Naive thymus-derived CD8-positive, alpha-beta T cell (primary cell): ENCODE measurements at regions of chr19 and their contacts with region 1.

Region 1: GRCh38 chr19:5947435-5947834 is 30.5 kb downstream of the RANBP3 start:
- DNase-seq: no peak
- ATAC-seq: no peak
- H3K4me3 Mint-ChIP-seq: peak overlapping the region in 7 of 10 donors; percentile 38 to 82 (median 67)
- H3K27ac Mint-ChIP-seq: peak overlapping the region; percentile 15 to 100 (median 90)
- H3K4me1 Mint-ChIP-seq: peaks cover 53 to 91% (median 84%) of the 10 kb centered on the region in 4 donors
- H3K27me3 Mint-ChIP-seq: no peaks in the 10 kb centered on the region

Region 2: DNA sequence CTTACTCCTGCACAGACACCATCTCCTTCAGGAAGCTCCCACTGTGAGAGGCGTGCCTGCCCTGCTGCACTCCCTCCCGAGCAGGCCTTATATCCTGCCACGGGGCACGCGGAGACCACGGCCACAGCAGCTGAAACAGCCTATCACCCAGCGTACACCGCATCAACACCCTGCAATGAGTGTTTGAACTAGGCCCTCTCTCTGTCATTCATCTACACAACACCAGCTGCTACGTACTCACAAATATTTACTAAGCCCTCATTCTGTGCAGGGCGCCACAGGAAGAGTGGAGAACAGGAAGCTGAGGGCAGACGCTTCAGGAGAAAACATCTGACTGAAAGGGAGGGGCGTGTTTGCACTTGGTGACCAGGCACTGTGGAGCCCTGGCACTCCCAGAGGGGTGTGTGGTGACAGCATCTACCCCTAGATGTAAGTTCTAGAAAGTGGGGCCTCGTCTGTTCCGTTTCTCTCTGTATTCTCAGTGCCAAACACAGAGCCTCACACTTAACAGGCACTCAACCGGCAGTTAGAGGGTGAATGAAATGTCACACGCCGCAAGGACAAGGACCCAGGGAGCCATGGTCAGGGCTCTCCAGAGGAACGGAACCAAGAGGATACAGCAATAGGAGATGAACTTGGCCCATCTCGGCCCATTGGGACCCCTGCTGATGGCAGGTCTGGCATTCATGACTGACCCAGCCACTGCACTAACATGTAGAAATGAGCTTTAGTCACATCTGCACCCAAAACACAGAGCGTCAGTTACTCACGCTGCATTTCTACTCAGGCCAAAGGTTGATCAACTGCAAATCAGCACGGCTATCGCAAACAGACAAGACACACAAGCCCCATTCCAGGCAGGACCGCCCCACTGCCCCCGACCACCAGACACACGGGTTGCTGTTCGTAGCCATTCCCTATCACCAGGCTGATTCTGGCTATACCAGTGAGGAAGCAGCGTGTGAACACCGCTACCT is 14.8 kb after region 1 on chr19:
- POLR2A ChIA-PET with region 1: interaction called, 81 read pairs
- DNase-seq: peak; percentile 58 to 90 (median 77)
- ATAC-seq: peak; percentile 91 to 96
- H3K4me3 Mint-ChIP-seq: peak overlapping the region; percentile 71 to 92 (median 88)
- H3K27ac Mint-ChIP-seq: peak overlapping the region; percentile 95 to 100 (median 100)
- H3K4me1 Mint-ChIP-seq: peaks cover 46 to 98% (median 96%) of the 10 kb centered on the region in 4 donors
- H3K27me3 Mint-ChIP-seq: no peaks in the 10 kb centered on the region

Region 3: DNA sequence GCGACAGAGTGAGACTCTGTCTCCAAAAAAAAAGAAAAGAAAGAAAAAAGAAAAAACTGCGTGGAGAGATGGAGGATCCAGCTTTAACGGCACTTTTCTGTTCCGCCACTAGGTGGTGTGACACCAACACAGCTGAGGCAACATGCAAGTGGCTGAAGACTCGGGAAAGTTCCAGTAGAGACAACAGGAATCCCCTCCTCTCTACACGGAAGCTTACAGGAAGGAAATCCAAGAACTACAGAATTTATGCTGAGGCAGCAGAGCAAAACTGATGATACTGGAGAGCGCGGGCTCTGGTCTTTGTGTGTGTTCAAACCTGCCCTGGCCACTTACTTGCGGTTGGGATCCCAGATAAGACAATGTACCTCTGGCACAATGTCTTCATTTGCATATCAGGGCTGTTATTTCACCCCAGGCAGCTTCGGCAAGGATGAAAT is 20.6 kb after region 1 on chr19:
- POLR2A ChIA-PET with region 1: interaction called, 81 read pairs
- DNase-seq: peak; percentile 39 to 72 (median 56)
- ATAC-seq: peak; percentile 73 to 78
- H3K4me3 Mint-ChIP-seq: peak overlapping the region; percentile 2 to 74 (median 64)
- H3K27ac Mint-ChIP-seq: peak overlapping the region; percentile 72 to 94 (median 84)
- H3K4me1 Mint-ChIP-seq: peaks cover 45 to 97% (median 93%) of the 10 kb centered on the region in 4 donors
- H3K27me3 Mint-ChIP-seq: no peaks in the 10 kb centered on the region

Region 4: GRCh38 chr19:5977785-5978605 is 30.6 kb after region 1 on chr19 and contains the start of gene RANBP3:
- POLR2A ChIA-PET with region 1: interaction called, 37 read pairs
- DNase-seq: peak; percentile 93 to 99 (median 99)
- ATAC-seq: peak; percentile 84 to 85
- H3K4me3 Mint-ChIP-seq: peak within 1 kb of the TSS; percentile 92 to 99 (median 96)
- H3K27ac Mint-ChIP-seq: peak within 1 kb of the TSS; percentile 86 to 99 (median 96)
- H3K4me1 Mint-ChIP-seq: peaks cover 30 to 60% (median 53%) of the 10 kb centered on the region in 4 donors
- H3K27me3 Mint-ChIP-seq: peaks cover 0 to 3% (median 0%) of the 10 kb centered on the region in 5 donors
- polyA plus RNA-seq, gene RANBP3: 7.7 to 13.0 (median 9.1) TPM

Region 5: DNA sequence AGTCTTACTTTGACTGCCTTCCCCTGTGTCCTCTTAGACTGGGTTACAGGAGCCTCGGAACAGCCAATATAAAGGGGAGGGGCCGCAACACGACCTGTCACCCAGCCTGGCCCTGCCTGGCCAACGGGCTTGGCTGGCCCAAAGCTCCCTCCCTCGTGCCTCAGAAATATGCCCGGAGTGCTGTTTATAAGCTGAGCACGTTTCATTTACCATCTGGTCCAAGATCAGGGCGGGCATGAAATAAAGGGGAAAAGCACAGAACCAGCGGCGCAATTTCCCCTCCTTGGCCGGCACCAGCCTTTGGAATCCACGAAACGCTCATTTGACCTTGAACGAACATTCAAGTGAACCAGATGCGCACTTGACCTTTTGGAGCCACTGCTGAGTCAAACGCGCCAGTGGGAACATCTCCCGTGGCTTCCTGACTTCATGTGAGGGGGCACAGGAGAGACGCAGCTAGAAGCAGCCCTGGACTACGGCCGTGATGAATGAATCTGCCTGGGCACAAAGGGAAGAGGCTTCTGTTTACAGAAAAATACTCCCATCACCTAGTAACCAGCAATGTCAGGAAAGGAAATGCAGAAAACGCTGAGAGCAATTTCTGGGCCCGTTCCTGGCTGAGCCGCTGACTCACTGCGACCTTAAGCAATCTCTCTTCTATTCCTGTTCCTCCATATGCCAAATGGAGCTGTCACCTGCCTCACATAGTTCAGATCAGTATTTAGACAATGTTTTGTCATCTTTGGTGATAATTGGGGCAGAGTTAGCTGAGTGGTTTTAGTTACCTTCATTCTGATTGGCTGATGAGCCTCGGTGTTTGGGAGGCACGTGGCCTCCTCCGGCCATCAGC is 109.6 kb after region 1 on chr19:
- POLR2A ChIA-PET with region 1: no interaction called
- DNase-seq: no peak
- ATAC-seq: no peak
- H3K4me3 Mint-ChIP-seq: peak overlapping the region in 1 of 10 donors; percentile 48
- H3K27ac Mint-ChIP-seq: peak overlapping the region in 1 of 10 donors; percentile 27
- H3K4me1 Mint-ChIP-seq: peaks cover 22 to 35% (median 25%) of the 10 kb centered on the region in 4 donors
- H3K27me3 Mint-ChIP-seq: no peaks in the 10 kb centered on the region